ENCODE measurements at regions of chr12 and their contacts with region 1.

Region 1: GRCh38 chr12:96399919-96400797 is at the start of gene CDK17:
- DNase-seq: peak; percentile 85 to 96
- ATAC-seq: peak; percentile 65 to 82 (median 68)
- H3K4me3 ChIP-seq: peak within 1 kb of the TSS; percentile 99
- H3K4me3 Mint-ChIP-seq: peak within 1 kb of the TSS; percentile 97
- H3K27ac ChIP-seq: peak within 1 kb of the TSS; percentile 98
- H3K27ac Mint-ChIP-seq: peak within 1 kb of the TSS; percentile 93 to 99
- H3K4me1 ChIP-seq: peaks cover 8% of the 10 kb centered on the region
- H3K4me1 Mint-ChIP-seq: peaks cover 48 to 52% of the 10 kb centered on the region in 2 donors
- H3K27me3 ChIP-seq: no peaks in the 10 kb centered on the region
- H3K27me3 Mint-ChIP-seq: no peaks in the 10 kb centered on the region
- CTCF ChIP-seq: no peak
- total RNA-seq, gene CDK17: 199 to 234 (median 232) TPM

Region 2: GRCh38 chr12:96194971-96195844 is 204.9 kb before region 1 on chr12:
- intact Hi-C with region 1: loop called (anchors 2 kb)
- DNase-seq: peak; percentile 53 to 91
- ATAC-seq: peak; percentile 60 to 76 (median 71)
- H3K4me3 ChIP-seq: peak overlapping the region; percentile 78
- H3K4me3 Mint-ChIP-seq: peak overlapping the region; percentile 99
- H3K27ac ChIP-seq: peak overlapping the region; percentile 81
- H3K27ac Mint-ChIP-seq: peak overlapping the region; percentile 97
- H3K4me1 ChIP-seq: peaks cover 21% of the 10 kb centered on the region
- H3K4me1 Mint-ChIP-seq: peaks cover 30 to 41% of the 10 kb centered on the region in 2 donors
- H3K27me3 ChIP-seq: no peaks in the 10 kb centered on the region
- H3K27me3 Mint-ChIP-seq: no peaks in the 10 kb centered on the region
- CTCF ChIP-seq: no peak

Region 3: DNA sequence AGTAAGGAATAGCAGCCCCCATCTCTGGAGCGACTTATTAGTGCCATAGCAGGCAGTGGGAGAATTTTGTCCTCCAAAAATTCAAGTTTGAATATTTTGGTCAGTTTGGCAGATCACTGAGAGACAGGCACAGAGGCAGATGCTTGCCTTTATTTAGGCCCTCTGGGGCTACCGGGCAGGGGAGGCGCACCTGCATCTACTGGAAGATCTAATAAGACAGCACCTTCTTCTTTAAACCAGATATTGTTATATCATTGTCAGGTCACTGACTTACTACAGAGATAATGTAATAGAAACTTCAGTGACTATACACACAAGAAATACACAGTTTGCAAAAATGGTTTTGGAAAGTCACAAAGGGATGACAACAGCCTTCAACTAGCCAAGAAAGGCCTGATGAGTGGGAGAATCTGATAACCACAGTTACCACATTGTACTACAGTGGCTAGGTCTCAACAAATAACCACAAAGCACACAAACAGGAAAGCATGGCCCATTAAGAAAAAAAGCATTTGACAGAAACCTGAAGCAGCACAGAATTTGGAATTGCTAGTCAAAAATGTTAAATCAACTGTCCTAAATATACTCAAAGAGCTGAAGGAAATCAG is 56.7 kb before region 1 on chr12:
- intact Hi-C with region 1: loop called (anchors 5 kb)
- DNase-seq: peak in 1 of 2 donors; percentile 64
- ATAC-seq: peak; percentile 72 to 87 (median 77)
- H3K4me3 ChIP-seq: no peak overlapping the region
- H3K4me3 Mint-ChIP-seq: peak overlapping the region; percentile 71
- H3K27ac ChIP-seq: no peak overlapping the region
- H3K27ac Mint-ChIP-seq: peak overlapping the region; percentile 47 to 54
- H3K4me1 ChIP-seq: peaks cover 30% of the 10 kb centered on the region
- H3K4me1 Mint-ChIP-seq: peaks cover 71 to 84% of the 10 kb centered on the region in 2 donors
- H3K27me3 ChIP-seq: no peaks in the 10 kb centered on the region
- H3K27me3 Mint-ChIP-seq: no peaks in the 10 kb centered on the region
- CTCF ChIP-seq: no peak

Region 4: GRCh38 chr12:96434107-96434506 is 33.9 kb after region 1 on chr12:
- intact Hi-C with region 1: loop called (anchors 1 kb)
- DNase-seq: peak; percentile 69 to 94
- ATAC-seq: peak; percentile 97 to 100 (median 97)
- H3K4me3 ChIP-seq: no peak overlapping the region
- H3K4me3 Mint-ChIP-seq: peak overlapping the region; percentile 36
- H3K27ac ChIP-seq: peak overlapping the region; percentile 79
- H3K27ac Mint-ChIP-seq: peak overlapping the region; percentile 68 to 86
- H3K4me1 ChIP-seq: peaks cover 22% of the 10 kb centered on the region
- H3K4me1 Mint-ChIP-seq: peaks cover 6 to 11% of the 10 kb centered on the region in 2 donors
- H3K27me3 ChIP-seq: no peaks in the 10 kb centered on the region
- H3K27me3 Mint-ChIP-seq: no peaks in the 10 kb centered on the region
- CTCF ChIP-seq: no peak

Region 5: DNA sequence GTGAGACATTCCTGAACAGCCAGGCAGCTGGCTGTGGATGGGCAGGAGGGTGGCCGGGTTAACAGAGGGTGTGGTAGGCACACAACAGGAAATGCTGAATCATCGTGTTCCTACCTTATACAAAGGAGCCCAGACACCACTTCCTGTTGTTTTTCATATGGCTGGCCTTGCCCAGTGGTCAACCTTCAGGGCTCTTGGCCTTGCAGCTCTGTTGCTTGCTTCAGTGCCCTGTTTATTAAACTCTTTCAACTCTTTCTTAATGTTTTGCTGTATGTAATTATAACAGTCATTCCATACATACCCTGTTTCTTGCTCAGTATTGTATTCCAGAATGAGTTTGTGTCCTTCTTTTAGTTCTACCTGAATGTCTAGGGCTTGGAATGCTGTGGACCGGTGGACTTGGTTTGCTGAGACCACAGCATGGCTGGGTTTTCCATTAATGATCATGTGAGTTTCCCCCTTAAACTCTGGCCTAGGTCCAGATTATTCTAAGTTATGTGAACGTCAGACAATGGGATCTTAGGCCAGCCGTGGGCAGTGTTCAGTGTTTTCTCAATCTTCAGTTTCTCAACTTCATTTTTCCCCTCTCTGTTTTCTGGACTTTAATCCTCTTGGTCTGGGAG is 101.1 kb after region 1 on chr12:
- intact Hi-C with region 1: loop called (anchors 5 kb)
- DNase-seq: peak; percentile 23 to 71
- ATAC-seq: peak; percentile 83 to 88 (median 86)
- H3K4me3 ChIP-seq: no peak overlapping the region
- H3K4me3 Mint-ChIP-seq: peak overlapping the region; percentile 77
- H3K27ac ChIP-seq: peak overlapping the region; percentile 72
- H3K27ac Mint-ChIP-seq: peak overlapping the region; percentile 88 to 94
- H3K4me1 ChIP-seq: peaks cover 23% of the 10 kb centered on the region
- H3K4me1 Mint-ChIP-seq: peaks cover 44 to 46% of the 10 kb centered on the region in 2 donors
- H3K27me3 ChIP-seq: no peaks in the 10 kb centered on the region
- H3K27me3 Mint-ChIP-seq: no peaks in the 10 kb centered on the region
- CTCF ChIP-seq: no peak

Measured in natural killer cell (primary cell).